ENCODE measurements at regions of chr6 and their contacts with region 1.

Region 1: GRCh38 chr6:134436281-134436815 is 118.4 kb upstream of the SGK1 start:
- DNase-seq: peak; percentile 64
- H3K4me3 Mint-ChIP-seq: peak overlapping the region; percentile 54
- H3K27ac Mint-ChIP-seq: peak overlapping the region; percentile 96
- H3K4me1 Mint-ChIP-seq: peaks cover 37% of the 10 kb centered on the region
- H3K27me3 Mint-ChIP-seq: no peaks in the 10 kb centered on the region

Region 2: GRCh38 chr6:134235937-134236751 is 200.2 kb before region 1 on chr6:
- intact Hi-C with region 1: loop called (anchors 2 kb)
- DNase-seq: no peak
- H3K4me3 Mint-ChIP-seq: no peak overlapping the region
- H3K27ac Mint-ChIP-seq: peak overlapping the region; percentile 58
- H3K4me1 Mint-ChIP-seq: peaks cover 38% of the 10 kb centered on the region
- H3K27me3 Mint-ChIP-seq: no peaks in the 10 kb centered on the region

Region 3: GRCh38 chr6:134373282-134373922 is 62.9 kb before region 1 on chr6:
- intact Hi-C with region 1: loop called (anchors 1 kb)
- DNase-seq: no peak
- H3K4me3 Mint-ChIP-seq: no peak overlapping the region
- H3K27ac Mint-ChIP-seq: peak overlapping the region; percentile 51
- H3K4me1 Mint-ChIP-seq: peaks cover 30% of the 10 kb centered on the region
- H3K27me3 Mint-ChIP-seq: no peaks in the 10 kb centered on the region

Region 4: DNA sequence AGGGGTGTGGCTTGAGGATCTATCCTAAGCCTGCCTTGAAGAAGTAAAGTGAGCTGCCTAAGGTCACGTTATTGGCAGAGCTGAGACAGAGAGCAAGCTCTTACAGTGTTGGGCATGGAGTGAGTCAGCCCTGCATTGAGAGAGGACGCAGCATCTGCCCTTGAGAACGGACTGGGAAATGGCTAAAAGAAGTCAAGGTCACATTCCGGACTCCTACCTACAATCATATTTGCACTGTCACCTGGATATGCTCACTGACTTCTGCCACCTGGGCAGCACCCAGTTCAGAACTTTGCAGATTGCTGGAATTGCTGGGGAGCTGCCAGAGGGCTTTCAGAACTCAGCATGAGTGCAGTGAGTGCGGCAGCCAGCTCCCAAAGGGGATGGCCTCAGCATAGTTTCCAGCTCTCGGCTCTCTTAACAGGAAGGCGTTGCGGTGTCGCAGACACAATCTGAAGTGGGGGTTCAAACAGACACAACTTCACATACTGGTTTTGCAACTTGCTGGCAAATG is 80.9 kb after region 1 on chr6:
- intact Hi-C with region 1: loop called (anchors 5 kb)
- DNase-seq: no peak
- H3K4me3 Mint-ChIP-seq: no peak overlapping the region
- H3K27ac Mint-ChIP-seq: no peak overlapping the region
- H3K4me1 Mint-ChIP-seq: peaks cover 32% of the 10 kb centered on the region
- H3K27me3 Mint-ChIP-seq: no peaks in the 10 kb centered on the region

Region 5: GRCh38 chr6:134640975-134641429 is 204.7 kb after region 1 on chr6:
- intact Hi-C with region 1: loop called (anchors 1 kb)
- DNase-seq: peak; percentile 64
- H3K4me3 Mint-ChIP-seq: no peak overlapping the region
- H3K27ac Mint-ChIP-seq: no peak overlapping the region
- H3K4me1 Mint-ChIP-seq: peaks cover 38% of the 10 kb centered on the region
- H3K27me3 Mint-ChIP-seq: peaks cover 7% of the 10 kb centered on the region

Measured in activated T-helper 2 cell treated with anti-CD3 and anti-CD28 coated beads, Interferon-gamma antibody, Interleukin-2, Interleukin-4, amounts not matched to agents 10 μg/mL and 5 μg/mL and 100 μg/mL, durations not matched to agents 14 hours and 24 hours and 36 hours (primary cell).